Activated B cell treated with CpG ODN at 0.5 μM for 24 hours (primary cell): ENCODE measurements at regions of chr16 and their contacts with region 1.

Region 1: GRCh38 chr16:70380861-70381603 is 34.3 kb downstream of the DDX19A start:
- DNase-seq: peak; percentile 83
- ATAC-seq: peak; percentile 90
- H3K4me3 Mint-ChIP-seq: peak overlapping the region; percentile 96
- H3K27ac Mint-ChIP-seq: peak overlapping the region; percentile 96
- H3K4me1 Mint-ChIP-seq: peaks cover 19% of the 10 kb centered on the region
- H3K27me3 Mint-ChIP-seq: no peaks in the 10 kb centered on the region
- CTCF ChIP-seq: no peak

Region 2: GRCh38 chr16:69773260-69773947 is 607.6 kb before region 1 on chr16:
- CTCF ChIA-PET with region 1: no interaction called
- POLR2A ChIA-PET with region 1: no interaction called
- intact Hi-C with region 1: no loop called
- DNase-seq: no peak
- ATAC-seq: peak; percentile 56
- H3K4me3 Mint-ChIP-seq: no peak overlapping the region
- H3K27ac Mint-ChIP-seq: peak overlapping the region; percentile 56
- H3K4me1 Mint-ChIP-seq: peaks cover 55% of the 10 kb centered on the region
- H3K27me3 Mint-ChIP-seq: no peaks in the 10 kb centered on the region
- CTCF ChIP-seq: no peak

Region 3: DNA sequence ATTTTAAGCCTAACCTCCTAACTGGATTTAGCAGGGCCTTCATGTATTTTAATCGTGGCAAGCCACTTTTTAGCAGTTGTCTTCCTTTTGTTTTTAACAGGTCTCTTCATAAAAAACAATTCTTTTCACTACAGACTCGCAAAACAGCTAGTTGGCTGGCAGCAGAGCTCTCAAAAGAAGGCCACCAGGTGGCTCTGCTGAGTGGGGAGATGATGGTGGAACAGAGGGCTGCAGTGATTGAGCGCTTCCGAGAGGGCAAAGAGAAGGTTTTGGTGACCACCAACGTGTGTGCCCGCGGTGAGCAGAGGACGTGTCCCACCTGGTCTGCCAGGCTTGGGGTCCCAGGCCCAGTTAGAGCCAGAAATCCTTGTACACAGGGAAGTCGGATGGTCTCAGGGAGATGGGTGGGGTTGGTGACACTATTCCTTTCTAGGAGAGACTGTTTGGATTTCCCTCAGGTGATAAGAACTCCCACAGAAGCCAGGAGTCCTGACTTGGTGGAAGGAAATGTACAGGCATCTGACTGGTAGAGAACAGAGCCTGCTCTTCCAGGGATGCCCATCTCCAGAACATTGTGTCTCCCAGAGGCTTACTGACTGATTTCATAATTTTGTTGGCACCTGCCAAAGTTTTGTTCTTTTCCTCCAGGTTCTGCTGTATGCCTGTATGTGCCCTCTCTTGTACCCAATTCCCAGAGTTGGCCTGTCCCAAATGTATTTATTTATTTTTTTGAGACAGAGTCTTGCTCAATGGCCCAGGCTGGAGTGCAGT is 49.3 kb before region 1 on chr16:
- CTCF ChIA-PET with region 1: no interaction called
- POLR2A ChIA-PET with region 1: no interaction called
- intact Hi-C with region 1: no loop called
- DNase-seq: no peak
- ATAC-seq: peak; percentile 49
- H3K4me3 Mint-ChIP-seq: no peak overlapping the region
- H3K27ac Mint-ChIP-seq: peak overlapping the region; percentile 32
- H3K4me1 Mint-ChIP-seq: no peaks in the 10 kb centered on the region
- H3K27me3 Mint-ChIP-seq: no peaks in the 10 kb centered on the region
- CTCF ChIP-seq: no peak

Region 4: GRCh38 chr16:70342016-70342415 is 39.0 kb before region 1 on chr16:
- CTCF ChIA-PET with region 1: interaction called, 3 read pairs
- POLR2A ChIA-PET with region 1: interaction called, 33 read pairs
- intact Hi-C with region 1: loop called (anchors 2 kb)
- DNase-seq: no peak
- ATAC-seq: no peak
- H3K4me3 Mint-ChIP-seq: no peak overlapping the region
- H3K27ac Mint-ChIP-seq: no peak overlapping the region
- H3K4me1 Mint-ChIP-seq: peaks cover 9% of the 10 kb centered on the region
- H3K27me3 Mint-ChIP-seq: no peaks in the 10 kb centered on the region
- CTCF ChIP-seq: no peak

Region 5: DNA sequence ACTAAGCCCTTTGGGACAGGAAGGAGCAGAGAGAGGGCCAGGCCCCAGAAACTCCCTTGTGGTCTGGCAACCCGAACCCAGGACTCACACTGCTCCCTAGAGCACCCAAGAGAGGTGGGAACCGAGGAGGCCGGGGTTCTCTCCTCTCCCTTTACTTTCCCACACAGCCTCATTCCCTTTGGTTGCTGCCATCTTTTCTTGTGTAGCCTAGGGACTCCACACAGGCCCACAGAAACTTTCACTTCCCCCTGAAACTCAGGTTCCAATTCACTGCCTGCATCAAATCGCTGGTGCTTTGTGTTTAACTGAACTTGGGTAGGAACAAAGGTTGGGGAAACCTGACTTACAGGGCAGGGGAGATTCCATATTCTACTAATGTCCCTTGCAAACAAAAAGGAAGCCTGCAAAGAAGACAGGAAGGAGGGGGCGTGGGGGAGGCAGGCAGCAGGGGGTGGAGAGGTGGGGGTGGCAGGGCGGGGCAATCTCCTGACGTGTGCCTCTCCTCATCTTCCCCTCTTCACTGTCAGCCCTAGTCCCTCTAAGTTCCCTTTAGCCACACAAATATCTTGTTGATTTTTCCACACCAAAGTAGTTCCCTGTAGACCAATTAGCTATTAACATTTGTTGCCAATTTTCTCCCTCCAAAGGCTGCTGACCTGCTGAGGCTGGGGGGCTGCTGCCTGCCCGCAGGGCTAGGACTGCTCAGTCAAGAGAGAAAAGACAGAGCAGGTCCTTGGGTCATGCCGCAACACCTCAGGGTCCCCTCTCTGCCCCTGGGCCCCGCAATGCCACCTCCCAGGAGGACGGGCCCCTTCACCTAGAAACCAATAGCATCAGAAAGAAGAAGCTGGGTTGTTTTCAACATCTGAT is 49.9 kb after region 1 on chr16:
- CTCF ChIA-PET with region 1: interaction called, 10 read pairs
- POLR2A ChIA-PET with region 1: interaction called, 68 read pairs
- intact Hi-C with region 1: loop called (anchors 1 kb)
- DNase-seq: peak; percentile 57
- ATAC-seq: peak; percentile 69
- H3K4me3 Mint-ChIP-seq: peak overlapping the region; percentile 75
- H3K27ac Mint-ChIP-seq: peak overlapping the region; percentile 97
- H3K4me1 Mint-ChIP-seq: peaks cover 83% of the 10 kb centered on the region
- H3K27me3 Mint-ChIP-seq: no peaks in the 10 kb centered on the region
- CTCF ChIP-seq: no peak

Region 6: GRCh38 chr16:70454222-70455034 is 73.4 kb after region 1 on chr16 and contains the start of gene FCSK:
- CTCF ChIA-PET with region 1: interaction called, 10 read pairs
- POLR2A ChIA-PET with region 1: interaction called, 85 read pairs
- intact Hi-C with region 1: loop called (anchors 1 kb)
- DNase-seq: peak; percentile 78
- ATAC-seq: peak; percentile 92
- H3K4me3 Mint-ChIP-seq: peak within 1 kb of the TSS; percentile 88
- H3K27ac Mint-ChIP-seq: peak within 1 kb of the TSS; percentile 89
- H3K4me1 Mint-ChIP-seq: peaks cover 16% of the 10 kb centered on the region
- H3K27me3 Mint-ChIP-seq: no peaks in the 10 kb centered on the region
- CTCF ChIP-seq: no peak
- total RNA-seq, gene FCSK: 20.1 and 21.4 TPM in 2 replicates

Region 7: DNA sequence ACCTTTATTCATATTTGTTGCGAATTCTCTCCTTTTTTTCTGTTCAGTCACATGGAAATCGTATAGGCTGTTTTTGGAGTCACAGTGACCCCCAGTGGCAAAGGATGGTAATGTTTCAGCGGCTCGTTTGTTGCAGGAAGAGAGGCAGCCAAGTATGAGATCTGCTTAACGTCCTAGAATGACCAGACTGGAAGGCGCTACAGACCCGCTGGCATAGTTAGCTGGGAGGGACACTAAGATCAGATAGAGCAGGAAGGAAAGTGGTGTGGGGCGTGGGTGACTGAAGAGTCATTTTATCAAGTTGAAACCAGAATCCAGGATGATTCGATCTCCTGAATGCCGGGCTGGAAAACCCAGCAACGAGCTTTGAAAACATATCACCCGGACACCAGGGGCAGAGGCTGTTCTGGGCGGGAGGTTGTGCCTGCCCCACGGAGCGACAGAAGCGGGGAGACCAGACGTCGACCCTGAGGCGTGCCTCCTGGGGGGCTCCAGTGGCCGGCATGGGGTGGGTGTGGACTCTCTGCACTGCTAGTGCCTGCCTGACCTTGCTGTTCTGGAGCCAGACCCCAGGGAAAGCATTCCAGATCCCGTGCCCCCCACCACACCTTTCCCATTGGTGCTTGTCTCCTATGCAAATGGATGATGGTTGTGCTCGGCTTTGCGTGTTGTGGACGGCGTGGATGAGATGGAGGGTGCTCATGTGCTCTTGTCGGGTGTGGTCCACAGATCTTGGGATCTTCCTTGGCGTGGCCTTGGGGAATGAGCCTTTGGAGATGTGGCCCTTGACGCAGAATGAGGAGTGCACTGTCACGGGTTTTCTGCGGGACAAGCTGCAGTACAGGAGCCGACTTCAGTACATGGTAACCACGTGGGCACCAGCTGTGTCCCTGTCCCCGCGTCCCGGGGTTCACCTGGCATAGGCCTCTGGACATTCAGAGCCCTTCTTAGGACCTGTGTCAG is 273.1 kb after region 1 on chr16:
- CTCF ChIA-PET with region 1: no interaction called
- POLR2A ChIA-PET with region 1: no interaction called
- intact Hi-C with region 1: loop called (anchors 5 kb)
- DNase-seq: peak; percentile 61
- ATAC-seq: peak; percentile 82
- H3K4me3 Mint-ChIP-seq: no peak overlapping the region
- H3K27ac Mint-ChIP-seq: no peak overlapping the region
- H3K4me1 Mint-ChIP-seq: peaks cover 5% of the 10 kb centered on the region
- H3K27me3 Mint-ChIP-seq: peaks cover 3% of the 10 kb centered on the region
- CTCF ChIP-seq: peak; percentile 20